ENCODE measurements at regions of chr19 and their contacts with region 1.

Region 1: DNA sequence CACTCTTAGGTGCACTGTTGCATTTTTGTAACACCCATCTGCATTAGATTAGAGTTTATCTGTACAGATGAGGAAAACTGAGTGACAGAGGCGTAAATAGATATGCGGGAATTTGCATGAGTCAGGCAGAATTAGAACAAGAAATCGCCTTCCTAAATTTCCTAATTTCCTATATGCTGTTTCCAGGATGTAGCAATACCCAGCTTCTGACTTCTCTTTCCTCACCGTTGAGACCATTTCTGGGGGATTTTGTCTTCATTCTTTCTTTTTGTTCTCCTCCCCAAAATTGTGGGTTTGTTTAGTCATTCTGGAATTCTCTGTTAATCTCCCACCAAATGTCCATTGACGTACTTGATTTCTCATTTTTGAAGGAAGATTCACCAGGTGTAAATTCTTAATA is 10.6 kb upstream of the ZNF792 start:
- DNase-seq: no peak
- ATAC-seq: no peak
- H3K4me3 Mint-ChIP-seq: no peak overlapping the region
- H3K27ac Mint-ChIP-seq: peak overlapping the region; percentile 16
- H3K4me1 Mint-ChIP-seq: peaks cover 36% of the 10 kb centered on the region
- H3K27me3 Mint-ChIP-seq: no peaks in the 10 kb centered on the region

Region 2: DNA sequence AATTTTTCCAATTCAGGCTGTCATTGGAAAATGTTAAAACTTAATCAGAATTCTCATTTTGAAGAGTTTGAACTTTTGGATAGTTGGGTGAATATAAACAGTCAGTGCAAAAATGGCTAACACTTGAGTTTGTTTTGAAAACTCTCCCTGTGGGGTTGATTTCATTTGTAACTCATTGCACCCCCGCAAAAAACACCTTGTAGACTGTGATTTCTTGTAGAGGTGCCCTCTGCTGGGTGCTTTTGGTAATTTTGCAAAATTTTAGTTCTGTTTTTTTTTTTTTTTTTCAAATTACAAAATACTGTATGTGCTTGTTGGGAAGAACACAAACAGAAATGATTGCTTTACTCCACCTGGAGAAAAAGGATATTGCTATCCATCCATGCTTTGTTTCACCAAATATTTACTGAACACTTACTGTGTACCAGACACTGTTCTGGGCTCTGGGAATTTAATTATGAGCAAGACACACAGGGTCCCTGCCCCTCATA is 637.8 kb before region 1 on chr19:
- CTCF ChIA-PET with region 1: no interaction called
- POLR2A ChIA-PET with region 1: no interaction called
- intact Hi-C with region 1: no loop called
- DNase-seq: peak; percentile 70
- ATAC-seq: peak; percentile 75
- H3K4me3 Mint-ChIP-seq: no peak overlapping the region
- H3K27ac Mint-ChIP-seq: peak overlapping the region; percentile 63
- H3K4me1 Mint-ChIP-seq: peaks cover 13% of the 10 kb centered on the region
- H3K27me3 Mint-ChIP-seq: no peaks in the 10 kb centered on the region

Region 3: DNA sequence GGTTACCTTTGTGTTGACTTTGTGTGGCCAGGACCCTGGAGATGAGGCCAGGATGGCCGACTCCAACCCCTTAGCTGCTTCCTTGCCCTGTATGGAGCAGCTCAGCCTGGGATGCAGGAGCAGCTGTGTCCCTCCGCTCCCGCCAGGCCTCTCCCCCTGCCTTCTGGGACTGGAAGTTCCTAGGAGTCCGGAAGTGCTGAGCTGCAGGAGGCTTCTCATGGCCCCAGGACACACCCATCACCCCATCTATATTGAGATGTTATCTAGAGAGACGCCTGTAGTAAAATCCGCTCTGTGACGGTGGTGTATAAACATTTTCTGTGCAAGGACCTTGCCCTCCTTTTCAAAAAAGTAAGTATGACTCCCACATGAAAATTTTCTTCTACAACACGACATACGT is 466.1 kb before region 1 on chr19:
- CTCF ChIA-PET with region 1: no interaction called
- POLR2A ChIA-PET with region 1: no interaction called
- intact Hi-C with region 1: no loop called
- DNase-seq: no peak
- ATAC-seq: no peak
- H3K4me3 Mint-ChIP-seq: no peak overlapping the region
- H3K27ac Mint-ChIP-seq: no peak overlapping the region
- H3K4me1 Mint-ChIP-seq: no peaks in the 10 kb centered on the region
- H3K27me3 Mint-ChIP-seq: peaks cover 14% of the 10 kb centered on the region

Region 4: GRCh38 chr19:34677386-34678084 is 297.1 kb before region 1 on chr19 and contains the start of gene ZNF302:
- CTCF ChIA-PET with region 1: interaction called, 3 read pairs
- POLR2A ChIA-PET with region 1: no interaction called
- intact Hi-C with region 1: loop called in 1 of 2 experiments (anchors 5 kb)
- DNase-seq: peak; percentile 97
- ATAC-seq: peak; percentile 86
- H3K4me3 Mint-ChIP-seq: peak within 1 kb of the TSS; percentile 81
- H3K27ac Mint-ChIP-seq: peak within 1 kb of the TSS; percentile 99
- H3K4me1 Mint-ChIP-seq: peaks cover 23% of the 10 kb centered on the region
- H3K27me3 Mint-ChIP-seq: no peaks in the 10 kb centered on the region
- total RNA-seq, gene ZNF302: 17.1 to 17.6 TPM

Region 5: DNA sequence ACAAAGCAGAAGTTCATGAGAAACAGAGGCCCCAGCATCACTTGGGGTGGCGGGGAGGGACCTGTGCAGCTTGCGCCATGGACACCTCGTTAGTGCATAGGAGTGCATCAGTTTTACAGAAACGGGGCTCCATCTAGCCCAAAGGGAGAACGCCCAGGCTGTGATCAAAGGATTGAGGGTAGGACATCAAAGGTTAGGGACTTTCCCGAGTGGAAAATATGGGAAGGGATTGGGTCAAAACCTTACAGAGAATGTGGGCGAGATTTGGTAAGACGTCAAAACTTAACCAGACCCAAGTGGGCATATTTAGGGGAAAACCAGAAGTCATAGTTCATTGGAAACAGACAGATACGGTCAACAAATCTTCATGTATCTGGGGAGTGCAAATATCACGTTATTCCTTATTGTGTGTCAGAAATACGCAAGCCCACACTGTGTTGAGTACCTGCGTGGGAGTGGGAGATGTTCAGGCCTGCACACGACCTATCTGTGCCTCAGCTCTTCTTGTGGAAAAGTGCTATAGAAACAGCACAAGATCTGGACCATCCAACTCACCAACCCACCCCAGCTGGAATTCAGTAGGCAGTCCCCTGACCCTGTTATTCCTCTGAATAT is 16.0 kb after region 1 on chr19:
- CTCF ChIA-PET with region 1: interaction called, 7 read pairs
- POLR2A ChIA-PET with region 1: no interaction called
- intact Hi-C with region 1: loop called in 1 of 2 experiments (anchors 2 kb)
- DNase-seq: peak; percentile 80
- ATAC-seq: peak; percentile 88
- H3K4me3 Mint-ChIP-seq: peak overlapping the region; percentile 29
- H3K27ac Mint-ChIP-seq: peak overlapping the region; percentile 93
- H3K4me1 Mint-ChIP-seq: peaks cover 60% of the 10 kb centered on the region
- H3K27me3 Mint-ChIP-seq: no peaks in the 10 kb centered on the region

Region 6: GRCh38 chr19:35013031-35013819 is 38.6 kb after region 1 on chr19:
- CTCF ChIA-PET with region 1: interaction called, 124 read pairs
- POLR2A ChIA-PET with region 1: no interaction called
- intact Hi-C with region 1: loop called (anchors 1 kb)
- DNase-seq: peak; percentile 89
- ATAC-seq: peak; percentile 86
- H3K4me3 Mint-ChIP-seq: peak overlapping the region; percentile 39
- H3K27ac Mint-ChIP-seq: peak overlapping the region; percentile 77
- H3K4me1 Mint-ChIP-seq: peaks cover 65% of the 10 kb centered on the region
- H3K27me3 Mint-ChIP-seq: no peaks in the 10 kb centered on the region

Region 7: GRCh38 chr19:35090506-35091237 is 116.0 kb after region 1 on chr19:
- CTCF ChIA-PET with region 1: no interaction called
- POLR2A ChIA-PET with region 1: interaction called, 4 read pairs
- intact Hi-C with region 1: loop called (anchors 1 kb)
- DNase-seq: peak; percentile 65
- ATAC-seq: peak; percentile 88
- H3K4me3 Mint-ChIP-seq: no peak overlapping the region
- H3K27ac Mint-ChIP-seq: no peak overlapping the region
- H3K4me1 Mint-ChIP-seq: peaks cover 4% of the 10 kb centered on the region
- H3K27me3 Mint-ChIP-seq: peaks cover 6% of the 10 kb centered on the region